AG04449 (cell line): ENCODE measurements at regions of chr16 and their contacts with region 1.

Region 1: GRCh38 chr16:17194190-17194780 is 276.5 kb downstream of the XYLT1 start:
- DNase-seq: no peak
- H3K4me3 ChIP-seq: no peak overlapping the region
- CTCF ChIP-seq: peak; percentile 82

Region 2: GRCh38 chr16:16881814-16882213 is 312.5 kb before region 1 on chr16:
- CTCF ChIA-PET with region 1: no interaction called
- POLR2A ChIA-PET with region 1: no interaction called
- DNase-seq: no peak
- H3K4me3 ChIP-seq: no peak overlapping the region
- CTCF ChIP-seq: no peak

Region 3: DNA sequence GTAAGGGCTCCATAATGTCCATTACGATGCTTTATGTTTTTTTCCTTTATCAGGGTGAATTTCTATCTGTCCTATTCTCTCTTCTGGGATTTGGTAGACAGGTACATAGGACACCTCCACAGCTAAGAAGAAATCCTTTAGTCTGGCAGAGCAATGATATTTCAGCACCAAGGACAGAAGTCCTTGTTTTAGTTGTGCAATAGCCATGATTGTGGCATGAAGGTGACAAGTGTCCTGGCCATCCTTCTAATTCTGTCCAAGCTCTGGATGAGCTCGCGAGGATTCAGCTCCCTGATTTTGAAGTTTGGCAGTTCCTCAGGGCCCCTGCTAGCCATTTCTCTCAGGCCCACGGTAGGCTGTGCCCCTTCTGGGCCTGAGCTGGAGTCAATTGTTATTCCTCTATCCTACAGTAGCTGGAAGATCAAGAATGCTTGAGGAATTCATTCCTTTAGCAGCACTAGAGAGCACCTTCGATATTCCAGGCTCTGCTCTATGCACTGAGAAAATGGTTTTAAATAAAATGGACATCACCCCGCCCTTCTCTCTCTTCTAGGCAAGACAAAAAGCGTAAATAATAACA is 44.3 kb before region 1 on chr16:
- CTCF ChIA-PET with region 1: no interaction called
- POLR2A ChIA-PET with region 1: no interaction called
- DNase-seq: no peak
- H3K4me3 ChIP-seq: no peak overlapping the region
- CTCF ChIP-seq: no peak

Region 4: DNA sequence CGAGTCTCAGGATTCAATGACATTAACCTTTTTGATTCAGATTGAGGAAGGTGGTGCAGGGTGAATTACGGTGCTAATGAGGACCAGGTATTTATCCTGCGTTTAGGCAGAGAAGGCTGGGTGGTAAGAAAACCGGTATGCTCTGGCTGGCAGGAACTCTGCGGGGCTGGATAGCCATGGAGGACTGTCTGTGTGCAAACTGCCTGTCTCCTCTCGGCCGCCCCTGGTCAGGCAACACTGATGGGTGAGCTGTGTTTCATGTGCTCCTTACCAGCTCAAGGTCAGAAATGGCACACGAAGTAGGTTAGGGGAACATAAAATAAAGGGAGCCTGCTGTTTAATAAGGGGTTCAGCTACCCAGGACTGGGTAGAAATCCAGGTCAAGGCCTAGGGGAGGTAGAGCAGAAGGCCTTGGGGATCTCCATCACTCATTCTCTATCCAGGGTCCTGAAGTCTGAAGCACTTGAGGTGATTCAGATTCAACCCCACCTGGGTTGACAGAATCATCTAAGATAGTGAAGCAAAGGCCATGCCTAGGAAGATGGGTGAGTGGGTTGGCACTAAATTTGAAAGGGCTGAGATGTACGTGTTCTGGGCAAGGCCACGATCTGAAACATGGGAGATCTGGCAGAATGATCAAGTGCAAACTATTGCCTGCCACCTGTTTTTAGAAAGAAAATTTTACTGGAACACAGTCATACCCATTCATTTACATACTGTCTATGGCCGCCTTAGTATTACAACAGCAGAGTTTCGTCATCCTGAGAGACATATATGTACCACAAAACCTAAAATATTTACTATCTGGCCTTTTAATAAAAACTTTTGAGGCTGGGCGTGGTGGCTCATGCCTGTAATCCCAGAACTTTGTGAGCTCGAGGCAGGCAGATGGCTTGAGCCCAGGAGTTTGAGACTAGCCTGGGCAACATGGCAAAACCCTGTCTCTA is 16.1 kb before region 1 on chr16:
- CTCF ChIA-PET with region 1: interaction called, 39 read pairs
- POLR2A ChIA-PET with region 1: no interaction called
- DNase-seq: no peak
- H3K4me3 ChIP-seq: no peak overlapping the region
- CTCF ChIP-seq: no peak

Region 5: GRCh38 chr16:17184026-17184425 is 10.3 kb before region 1 on chr16:
- CTCF ChIA-PET with region 1: interaction called, 39 read pairs
- POLR2A ChIA-PET with region 1: no interaction called
- DNase-seq: no peak
- H3K4me3 ChIP-seq: no peak overlapping the region
- CTCF ChIP-seq: no peak

Region 6: GRCh38 chr16:17205279-17206211 is 11.3 kb after region 1 on chr16:
- CTCF ChIA-PET with region 1: interaction called, 32 read pairs
- POLR2A ChIA-PET with region 1: no interaction called
- DNase-seq: peak; percentile 57
- H3K4me3 ChIP-seq: no peak overlapping the region
- CTCF ChIP-seq: no peak